Mammary epithelial cell (primary cell): ENCODE measurements at regions of chr10 and their contacts with region 1.

Region 1: GRCh38 chr10:89426230-89426868 is 12.0 kb downstream of the IFIT5 start:
- DNase-seq: peak; percentile 50
- H3K4me3 ChIP-seq: no peak overlapping the region
- H3K27ac ChIP-seq: no peak overlapping the region
- H3K4me1 ChIP-seq: peaks cover 31% of the 10 kb centered on the region
- H3K27me3 ChIP-seq: no peaks in the 10 kb centered on the region
- CTCF ChIP-seq: peak; percentile 76 to 80

Region 2: DNA sequence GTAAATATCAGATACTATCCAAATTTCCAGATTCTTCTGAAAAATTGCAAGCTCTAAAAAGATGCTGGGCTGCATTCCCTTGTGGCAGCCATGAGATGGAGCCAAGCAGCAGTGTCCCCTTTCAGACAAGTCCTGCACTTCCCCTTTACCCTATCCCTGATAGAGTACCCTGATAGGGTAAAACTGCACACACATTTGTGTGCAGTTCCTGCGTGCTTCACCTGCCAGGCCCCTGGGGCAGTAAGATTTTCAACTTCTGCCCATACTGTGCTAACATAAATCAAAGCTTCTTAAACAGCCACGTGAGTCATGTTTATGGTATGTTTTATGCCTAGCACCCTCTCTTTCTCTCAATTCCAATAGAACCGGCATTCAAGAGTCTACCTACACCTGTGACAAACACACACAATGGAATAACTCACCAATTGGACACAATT is 40.3 kb after region 1 on chr10:
- CTCF ChIA-PET with region 1: no interaction called
- dilution Hi-C with region 1: no loop called
- in situ Hi-C with region 1: no loop called
- intact Hi-C with region 1: loop called (anchors 2 kb)
- DNase-seq: peak; percentile 80
- H3K4me3 ChIP-seq: no peak overlapping the region
- H3K27ac ChIP-seq: no peak overlapping the region
- H3K4me1 ChIP-seq: peaks cover 40% of the 10 kb centered on the region
- H3K27me3 ChIP-seq: no peaks in the 10 kb centered on the region
- CTCF ChIP-seq: peak; percentile 52 to 53

Region 3: GRCh38 chr10:89502556-89502955 is 76.2 kb after region 1 on chr10:
- CTCF ChIA-PET with region 1: no interaction called
- dilution Hi-C with region 1: no loop called
- in situ Hi-C with region 1: no loop called
- intact Hi-C with region 1: no loop called
- DNase-seq: peak; percentile 52
- H3K4me3 ChIP-seq: no peak overlapping the region
- H3K27ac ChIP-seq: no peak overlapping the region
- H3K4me1 ChIP-seq: no peaks in the 10 kb centered on the region
- H3K27me3 ChIP-seq: no peaks in the 10 kb centered on the region
- CTCF ChIP-seq: no peak

Region 4: DNA sequence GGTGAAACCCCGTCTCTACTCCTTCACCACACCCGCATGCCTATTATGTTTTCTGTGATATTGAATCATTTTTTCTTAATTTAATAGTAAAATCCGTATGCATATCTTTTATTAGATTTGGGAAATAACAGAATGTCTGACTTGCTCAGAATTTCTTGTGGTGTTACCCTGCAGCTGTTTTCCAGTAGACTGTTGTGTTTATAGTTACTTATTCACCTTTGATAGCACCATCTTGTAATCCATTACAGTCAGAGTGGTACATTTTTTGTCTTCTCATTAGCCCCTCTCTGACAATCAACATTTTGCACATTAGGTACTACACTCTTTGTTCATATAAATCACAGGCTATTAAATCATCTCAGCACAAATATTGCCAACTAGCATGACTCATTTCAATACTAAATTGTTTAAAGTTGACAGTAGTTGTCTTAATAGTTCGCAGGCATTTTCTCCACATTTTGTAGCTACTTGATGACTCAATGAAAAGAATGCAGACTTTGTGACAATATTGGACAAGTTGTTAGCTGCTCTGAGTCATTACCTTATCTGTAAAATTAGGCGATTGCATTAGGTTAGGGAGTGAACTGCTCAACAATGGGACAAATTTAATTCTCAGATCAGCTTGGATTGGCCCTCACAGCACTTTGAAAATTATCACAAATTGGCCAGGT is 126.8 kb after region 1 on chr10:
- CTCF ChIA-PET with region 1: no interaction called
- dilution Hi-C with region 1: no loop called
- in situ Hi-C with region 1: loop called (anchors 5 kb)
- intact Hi-C with region 1: loop called (anchors 1 kb)
- DNase-seq: peak; percentile 88
- H3K4me3 ChIP-seq: no peak overlapping the region
- H3K27ac ChIP-seq: no peak overlapping the region
- H3K4me1 ChIP-seq: peaks cover 27% of the 10 kb centered on the region
- H3K27me3 ChIP-seq: no peaks in the 10 kb centered on the region
- CTCF ChIP-seq: no peak

Region 5: GRCh38 chr10:89563861-89564478 is 137.6 kb after region 1 on chr10:
- CTCF ChIA-PET with region 1: no interaction called
- dilution Hi-C with region 1: no loop called
- in situ Hi-C with region 1: loop called in 1 of 2 experiments (anchors 5 kb)
- intact Hi-C with region 1: loop called (anchors 1 kb)
- DNase-seq: peak; percentile 48
- H3K4me3 ChIP-seq: no peak overlapping the region
- H3K27ac ChIP-seq: no peak overlapping the region
- H3K4me1 ChIP-seq: no peaks in the 10 kb centered on the region
- H3K27me3 ChIP-seq: no peaks in the 10 kb centered on the region
- CTCF ChIP-seq: peak; percentile 63 to 71

Region 6: GRCh38 chr10:89701238-89702120 is 275.1 kb after region 1 on chr10 and contains the start of gene KIF20B:
- CTCF ChIA-PET with region 1: no interaction called
- dilution Hi-C with region 1: no loop called
- in situ Hi-C with region 1: no loop called
- intact Hi-C with region 1: loop called (anchors 1 kb)
- DNase-seq: peak; percentile 98
- H3K4me3 ChIP-seq: peak within 1 kb of the TSS; percentile 54 to 96 (median 84)
- H3K27ac ChIP-seq: peak within 1 kb of the TSS; percentile 95
- H3K4me1 ChIP-seq: peaks cover 12% of the 10 kb centered on the region
- H3K27me3 ChIP-seq: no peaks in the 10 kb centered on the region
- CTCF ChIP-seq: peak; percentile 10 to 51
- total RNA-seq, gene KIF20B: 3.8 to 29.9 TPM